MCF 10A (cell line): ENCODE measurements at regions of chr13 and their contacts with region 1.

Region 1: GRCh38 chr13:110561344-110562035 is at the start of gene RAB20:
- DNase-seq: peak; percentile 87
- H3K4me3 Mint-ChIP-seq: peak within 1 kb of the TSS; percentile 88
- H3K27ac Mint-ChIP-seq: peak within 1 kb of the TSS; percentile 33
- H3K4me1 Mint-ChIP-seq: peaks cover 13% of the 10 kb centered on the region
- H3K27me3 Mint-ChIP-seq: no peaks in the 10 kb centered on the region
- CTCF ChIP-seq: no peak
- total RNA-seq, gene RAB20: 1.7 and 2.8 TPM in 2 replicates

Region 2: GRCh38 chr13:110546930-110547329 is 14.6 kb before region 1 on chr13:
- CTCF ChIA-PET with region 1: interaction called, 8 read pairs
- POLR2A ChIA-PET with region 1: interaction called, 18 read pairs
- intact Hi-C with region 1: no loop called
- DNase-seq: peak; percentile 98
- H3K4me3 Mint-ChIP-seq: no peak overlapping the region
- H3K27ac Mint-ChIP-seq: peak overlapping the region; percentile 6
- H3K4me1 Mint-ChIP-seq: peaks cover 8% of the 10 kb centered on the region
- H3K27me3 Mint-ChIP-seq: no peaks in the 10 kb centered on the region
- CTCF ChIP-seq: no peak